B cell (primary cell): ENCODE measurements at regions of chr5 and their contacts with region 1.

Region 1: GRCh38 chr5:5492087-5492933 is 69.8 kb downstream of the ICE1 start:
- DNase-seq: peak; percentile 74
- ATAC-seq: peak; percentile 22
- H3K4me3 ChIP-seq: no peak overlapping the region
- H3K4me3 Mint-ChIP-seq: peak overlapping the region; percentile 69
- H3K27ac ChIP-seq: no peak overlapping the region
- H3K27ac Mint-ChIP-seq: peak overlapping the region; percentile 32
- H3K4me1 ChIP-seq: peaks cover 11 to 18% of the 10 kb centered on the region in 2 donors
- H3K4me1 Mint-ChIP-seq: peaks cover 23% of the 10 kb centered on the region
- H3K27me3 ChIP-seq: no peaks in the 10 kb centered on the region
- H3K27me3 Mint-ChIP-seq: no peaks in the 10 kb centered on the region
- CTCF ChIP-seq: peak; percentile 87

Region 2: GRCh38 chr5:5141625-5142532 is 350.4 kb before region 1 on chr5:
- CTCF ChIA-PET with region 1: no interaction called
- POLR2A ChIA-PET with region 1: no interaction called
- intact Hi-C with region 1: loop called (anchors 10 kb)
- DNase-seq: peak; percentile 61
- ATAC-seq: no peak
- H3K4me3 ChIP-seq: no peak overlapping the region
- H3K4me3 Mint-ChIP-seq: no peak overlapping the region
- H3K27ac ChIP-seq: no peak overlapping the region
- H3K27ac Mint-ChIP-seq: no peak overlapping the region
- H3K4me1 ChIP-seq: peaks cover 0 to 3% of the 10 kb centered on the region in 2 donors
- H3K4me1 Mint-ChIP-seq: peaks cover 3% of the 10 kb centered on the region
- H3K27me3 ChIP-seq: peaks cover 0 to 17% (median 11%) of the 10 kb centered on the region in 4 experiments
- H3K27me3 Mint-ChIP-seq: peaks cover 23% of the 10 kb centered on the region
- CTCF ChIP-seq: peak; percentile 96

Region 3: GRCh38 chr5:5523066-5523505 is 30.8 kb after region 1 on chr5:
- CTCF ChIA-PET with region 1: no interaction called
- POLR2A ChIA-PET with region 1: no interaction called
- intact Hi-C with region 1: loop called (anchors 1 kb)
- DNase-seq: peak; percentile 79
- ATAC-seq: peak; percentile 80
- H3K4me3 ChIP-seq: peak overlapping the region in 2 of 5 experiments; percentile 36 to 40
- H3K4me3 Mint-ChIP-seq: peak overlapping the region; percentile 78
- H3K27ac ChIP-seq: no peak overlapping the region
- H3K27ac Mint-ChIP-seq: peak overlapping the region; percentile 83
- H3K4me1 ChIP-seq: peaks cover 7 to 9% of the 10 kb centered on the region in 2 donors
- H3K4me1 Mint-ChIP-seq: peaks cover 14% of the 10 kb centered on the region
- H3K27me3 ChIP-seq: peaks cover 0 to 2% (median 0%) of the 10 kb centered on the region in 4 experiments
- H3K27me3 Mint-ChIP-seq: no peaks in the 10 kb centered on the region
- CTCF ChIP-seq: no peak

Region 4: GRCh38 chr5:5752844-5753243 is 260.5 kb after region 1 on chr5:
- CTCF ChIA-PET with region 1: no interaction called
- POLR2A ChIA-PET with region 1: no interaction called
- intact Hi-C with region 1: loop called (anchors 10 kb)
- DNase-seq: peak; percentile 63
- ATAC-seq: peak; percentile 65
- H3K4me3 ChIP-seq: peak overlapping the region in 1 of 5 experiments; percentile 40
- H3K4me3 Mint-ChIP-seq: peak overlapping the region; percentile 81
- H3K27ac ChIP-seq: peak overlapping the region; percentile 62
- H3K27ac Mint-ChIP-seq: peak overlapping the region; percentile 90
- H3K4me1 ChIP-seq: peaks cover 52 to 59% of the 10 kb centered on the region in 2 donors
- H3K4me1 Mint-ChIP-seq: peaks cover 69% of the 10 kb centered on the region
- H3K27me3 ChIP-seq: no peaks in the 10 kb centered on the region
- H3K27me3 Mint-ChIP-seq: no peaks in the 10 kb centered on the region
- CTCF ChIP-seq: no peak

Region 5: GRCh38 chr5:5881294-5881693 is 389.0 kb after region 1 on chr5:
- CTCF ChIA-PET with region 1: interaction called, 17 read pairs
- POLR2A ChIA-PET with region 1: no interaction called
- intact Hi-C with region 1: loop called (anchors 2 kb)
- DNase-seq: peak; percentile 9
- ATAC-seq: peak; percentile 21
- H3K4me3 ChIP-seq: no peak overlapping the region
- H3K4me3 Mint-ChIP-seq: no peak overlapping the region
- H3K27ac ChIP-seq: no peak overlapping the region
- H3K27ac Mint-ChIP-seq: no peak overlapping the region
- H3K4me1 ChIP-seq: no peaks in the 10 kb centered on the region
- H3K4me1 Mint-ChIP-seq: no peaks in the 10 kb centered on the region
- H3K27me3 ChIP-seq: no peaks in the 10 kb centered on the region
- H3K27me3 Mint-ChIP-seq: peaks cover 32% of the 10 kb centered on the region
- CTCF ChIP-seq: no peak